Right ventricle myocardium inferior (tissue), 1 donor: ENCODE measurements at regions of chr13 and their contacts with region 1.

Region 1: GRCh38 chr13:30306762-30307193 is 573 bp downstream of the KATNAL1 start:
- DNase-seq: peak; percentile 96
- ATAC-seq: peak; percentile 97

Region 2: DNA sequence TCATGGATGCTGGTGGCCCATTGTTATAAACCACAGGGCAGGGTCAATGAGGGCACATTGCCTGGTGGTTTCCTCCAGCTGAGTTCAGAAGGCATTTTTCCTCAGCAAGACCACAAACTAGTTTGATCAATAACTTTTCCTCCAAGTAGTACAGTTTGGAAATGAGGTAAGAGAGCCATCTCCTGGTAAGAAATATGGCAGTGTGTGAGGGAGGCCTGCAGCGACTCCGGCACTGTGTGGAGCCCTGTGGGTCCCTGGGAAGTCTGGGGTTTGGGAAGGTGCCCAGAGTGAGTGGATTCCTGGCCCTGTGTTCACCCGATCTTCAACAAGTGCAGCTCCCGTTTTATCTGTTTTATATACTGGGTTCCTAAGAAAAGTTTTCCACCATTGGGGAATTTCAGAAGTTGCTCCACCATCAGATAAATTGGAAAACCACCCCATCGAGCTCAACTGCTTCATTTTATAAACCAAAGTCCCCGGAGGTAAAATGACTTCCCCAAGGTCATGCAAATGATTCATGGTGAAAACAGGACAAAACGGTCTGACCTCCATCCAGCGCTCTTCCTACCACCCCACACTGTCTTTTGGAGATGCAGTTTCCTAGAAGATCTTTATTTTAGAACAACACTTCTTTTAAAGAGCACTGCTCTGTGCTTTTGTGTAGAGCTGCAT is 147.9 kb before region 1 on chr13:
- intact Hi-C with region 1: no loop called
- DNase-seq: no peak
- ATAC-seq: no peak

Region 3: DNA sequence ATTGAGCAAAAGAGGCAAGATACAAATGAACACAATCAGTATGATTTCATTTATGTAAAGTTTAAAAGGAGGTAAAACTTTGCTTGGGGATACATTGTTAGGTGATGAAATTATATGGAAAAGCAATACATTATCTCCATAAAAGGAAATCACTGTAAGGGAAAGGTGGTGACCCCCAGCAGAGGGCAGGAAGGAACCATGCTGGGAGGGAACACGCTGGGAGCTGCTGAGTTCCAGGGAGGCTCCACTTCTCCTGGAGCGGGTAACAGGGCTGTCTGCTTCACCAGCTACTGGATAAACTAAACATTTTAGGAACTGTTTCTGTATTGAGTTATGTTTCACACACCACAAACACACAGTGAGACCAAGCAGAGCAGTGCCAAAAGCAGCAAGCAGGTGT is 90.7 kb before region 1 on chr13:
- intact Hi-C with region 1: no loop called
- DNase-seq: no peak
- ATAC-seq: no peak

Region 4: DNA sequence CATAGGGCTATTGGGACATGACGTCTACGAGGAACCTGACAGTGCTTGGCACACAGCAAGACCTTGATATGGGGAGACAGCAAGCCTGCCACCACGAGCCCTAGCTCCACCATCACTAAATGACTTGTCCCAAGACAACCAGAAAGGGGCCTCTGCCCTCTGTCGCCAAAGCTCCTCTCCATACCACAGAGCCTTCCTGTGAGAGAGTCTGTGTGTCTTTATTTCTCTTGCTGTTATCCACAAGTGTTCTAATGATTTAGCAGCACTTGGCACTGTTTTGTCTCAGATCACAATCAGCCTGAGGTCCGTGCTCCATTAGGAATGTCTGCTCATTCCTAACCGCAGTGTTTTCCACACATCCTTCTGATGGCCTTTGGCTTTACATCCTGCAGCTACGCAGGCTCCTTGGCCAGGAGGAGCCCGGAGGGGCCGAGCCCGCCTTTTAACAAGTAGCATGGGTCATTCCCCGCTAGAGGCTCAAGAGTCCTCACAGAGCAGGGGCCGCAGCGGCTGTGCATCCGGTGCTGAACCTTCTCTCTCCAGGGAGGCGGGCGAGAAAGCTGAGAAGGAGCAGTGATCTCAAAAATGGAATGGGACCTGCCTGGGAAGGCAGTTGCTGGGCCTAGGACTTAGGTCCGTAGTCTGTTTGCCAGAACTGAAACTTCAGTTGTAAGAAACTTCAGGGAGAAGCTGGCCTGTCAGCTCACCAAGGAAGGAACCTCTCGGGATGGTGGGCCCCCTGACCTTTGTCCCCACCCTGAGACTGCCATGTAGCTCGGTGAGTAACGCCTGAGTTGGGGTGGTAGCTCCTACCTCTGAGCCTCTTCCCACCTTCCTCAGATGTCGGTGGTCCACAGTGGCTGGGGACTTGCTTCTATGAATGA is 220.1 kb after region 1 on chr13:
- intact Hi-C with region 1: no loop called
- DNase-seq: no peak
- ATAC-seq: no peak

Region 5: DNA sequence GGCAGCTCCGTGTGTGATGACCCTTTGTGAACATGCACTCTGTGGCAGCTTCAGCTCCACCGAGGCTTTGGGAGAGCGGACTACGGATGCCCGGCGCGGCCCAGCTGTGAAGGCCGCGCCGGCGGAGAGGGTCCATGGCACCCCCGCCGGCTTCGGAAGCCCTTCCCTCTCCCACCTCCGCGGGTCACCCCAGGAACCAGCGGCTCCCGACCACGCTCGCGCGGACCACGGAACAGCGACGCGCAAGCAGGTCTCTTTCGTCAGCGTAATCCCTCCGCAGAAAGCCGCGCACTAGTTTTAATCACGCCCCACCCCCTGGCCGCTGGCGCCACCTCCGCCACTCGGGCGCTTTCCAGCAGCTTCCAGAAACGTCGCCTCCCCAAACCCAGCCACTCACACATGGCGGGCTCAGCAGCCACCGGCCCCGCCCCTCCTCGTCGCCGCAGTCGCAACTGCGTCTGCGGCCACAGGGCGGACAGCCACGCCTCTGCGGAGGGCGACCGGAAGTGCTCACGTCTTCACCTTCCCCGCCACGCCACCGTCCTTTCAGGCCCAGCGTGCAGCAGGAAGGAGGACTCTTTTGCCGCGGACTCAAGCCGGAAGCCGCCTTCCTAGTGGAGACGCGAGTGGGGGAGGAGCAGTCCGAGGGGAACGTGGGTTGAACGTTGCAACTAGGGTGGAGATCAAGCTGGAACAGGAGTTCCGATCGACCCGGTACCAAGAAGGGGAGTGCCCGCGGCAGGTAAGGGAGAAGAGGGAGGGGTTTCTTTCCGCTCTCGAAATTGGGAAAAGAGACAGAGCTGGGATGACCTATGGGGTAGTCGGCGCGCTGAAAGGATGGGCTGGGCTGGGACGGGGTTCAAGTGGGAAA is 310.8 kb after region 1 on chr13 and contains the start of gene USPL1:
- intact Hi-C with region 1: loop called (anchors 5 kb)
- DNase-seq: peak; percentile 99
- ATAC-seq: peak; percentile 97
- total RNA-seq, gene USPL1: 10.3 TPM